ENCODE measurements at regions of chr12 and their contacts with region 1.

Region 1: DNA sequence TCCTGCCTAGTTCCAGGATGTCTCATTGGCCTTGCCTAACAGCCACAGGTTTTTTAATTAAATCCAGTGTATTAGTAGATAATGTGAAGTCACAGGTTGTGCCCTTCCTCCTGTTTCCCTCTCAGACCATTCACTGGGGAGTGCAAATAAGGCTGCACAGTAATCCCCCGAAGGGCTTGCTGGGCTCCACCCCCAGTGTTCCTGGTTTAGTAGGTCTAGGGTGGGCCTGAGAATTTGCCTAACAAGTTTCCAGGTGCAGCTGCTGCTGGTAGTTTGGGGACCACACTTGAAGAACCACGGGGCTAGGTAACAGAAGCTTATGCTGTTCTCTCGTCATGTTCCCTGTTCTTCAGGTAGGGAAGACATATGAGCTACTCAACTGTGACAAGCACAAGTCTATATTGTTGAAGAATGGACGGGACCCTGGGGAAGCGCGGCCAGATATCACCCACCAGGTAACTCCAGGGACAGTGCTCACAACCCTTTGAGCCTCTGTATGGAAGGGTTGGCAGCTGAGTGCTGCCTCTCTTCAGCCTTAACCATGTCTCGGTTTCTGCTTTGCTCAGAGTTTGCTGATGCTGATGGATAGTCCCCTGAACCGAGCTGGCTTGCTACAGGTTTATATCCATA is 3.4 kb downstream of the EMG1 start:
- DNase-seq: no peak
- ATAC-seq: no peak
- H3K4me3 Mint-ChIP-seq: no peak overlapping the region
- H3K27ac Mint-ChIP-seq: peak overlapping the region; percentile 55
- H3K4me1 Mint-ChIP-seq: peaks cover 29% of the 10 kb centered on the region
- H3K27me3 Mint-ChIP-seq: no peaks in the 10 kb centered on the region

Region 2: GRCh38 chr12:6987948-6988553 is 13.9 kb after region 1 on chr12:
- CTCF ChIA-PET with region 1: interaction called, 5 read pairs
- POLR2A ChIA-PET with region 1: interaction called, 12 read pairs
- intact Hi-C with region 1: no loop called
- DNase-seq: no peak
- ATAC-seq: no peak
- H3K4me3 Mint-ChIP-seq: no peak overlapping the region
- H3K27ac Mint-ChIP-seq: no peak overlapping the region
- H3K4me1 Mint-ChIP-seq: no peaks in the 10 kb centered on the region
- H3K27me3 Mint-ChIP-seq: no peaks in the 10 kb centered on the region

Measured in activated CD4-positive, alpha-beta T cell treated with anti-CD3 and anti-CD28 coated beads for 36 hours (primary cell).